Uterus (tissue), 4 donors: ENCODE measurements at regions of chr17 and their contacts with region 1.

Region 1: DNA sequence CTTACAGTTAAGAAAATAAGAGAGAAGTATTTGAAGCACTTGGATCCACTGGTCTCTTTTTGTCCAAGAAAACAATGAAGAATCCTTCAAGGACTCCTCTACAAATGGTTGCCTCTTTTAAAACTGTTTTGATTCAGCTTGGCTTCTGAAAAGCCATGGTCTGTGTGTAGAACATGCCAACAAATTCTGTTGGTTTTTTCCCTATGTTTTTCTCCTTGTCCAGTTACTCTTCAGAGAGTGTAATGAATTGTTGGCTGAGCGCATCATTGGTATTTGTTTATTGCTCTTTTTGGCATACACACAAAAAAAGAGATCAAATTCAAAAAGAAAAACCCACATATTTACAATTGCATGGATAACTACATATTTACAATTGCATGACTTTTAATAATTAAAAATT is at the start of gene ABCA10:
- DNase-seq: no peak
- H3K4me3 ChIP-seq: peak within 1 kb of the TSS in 1 of 2 donors; percentile 28
- H3K27ac ChIP-seq: peak within 1 kb of the TSS; percentile 46 to 69
- H3K4me1 ChIP-seq: no peaks in the 10 kb centered on the region
- H3K27me3 ChIP-seq: no peaks in the 10 kb centered on the region
- CTCF ChIP-seq: no peak
- POLR2A ChIP-seq: no peak
- total RNA-seq, gene ABCA10: 11.1 to 32.8 (median 21.7) TPM

Region 2: DNA sequence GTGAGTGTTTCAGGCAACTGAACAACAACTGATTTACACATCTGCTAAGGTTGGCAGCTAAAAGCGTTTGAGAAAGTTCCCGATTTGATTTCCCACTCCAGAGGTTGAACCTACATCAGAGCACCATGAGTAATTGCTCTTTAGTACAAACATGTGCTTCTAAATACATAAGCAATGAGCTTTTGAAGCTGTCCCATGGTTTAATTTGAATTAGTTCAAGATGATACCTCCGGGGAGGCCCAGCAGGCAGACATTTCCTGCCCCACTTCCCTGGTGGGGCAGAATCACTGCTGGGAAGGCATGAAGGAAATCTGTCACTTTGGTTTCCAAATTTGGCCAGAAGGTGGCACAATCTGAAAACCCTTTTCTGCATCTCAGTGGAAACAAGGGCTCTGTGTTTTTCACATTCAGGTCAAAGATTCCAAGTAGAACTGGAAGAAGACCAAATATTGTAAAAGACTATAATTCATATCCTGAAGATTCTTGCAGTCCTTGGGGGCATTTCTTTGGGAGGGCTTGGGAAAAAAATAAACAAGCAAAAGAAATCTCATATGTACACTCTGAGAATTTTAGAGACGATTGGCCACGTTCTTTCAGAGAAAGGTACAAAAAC is 451.2 kb before region 1 on chr17:
- intact Hi-C with region 1: loop called (anchors 5 kb)
- DNase-seq: peak; percentile 49 to 72
- H3K4me3 ChIP-seq: no peak overlapping the region
- H3K27ac ChIP-seq: peak overlapping the region; percentile 67 to 76
- H3K4me1 ChIP-seq: peaks cover 0 to 5% of the 10 kb centered on the region in 2 donors
- H3K27me3 ChIP-seq: no peaks in the 10 kb centered on the region
- CTCF ChIP-seq: peak; percentile 69 to 84 (median 72)
- POLR2A ChIP-seq: peak in 1 of 2 donors; percentile 8

Region 3: DNA sequence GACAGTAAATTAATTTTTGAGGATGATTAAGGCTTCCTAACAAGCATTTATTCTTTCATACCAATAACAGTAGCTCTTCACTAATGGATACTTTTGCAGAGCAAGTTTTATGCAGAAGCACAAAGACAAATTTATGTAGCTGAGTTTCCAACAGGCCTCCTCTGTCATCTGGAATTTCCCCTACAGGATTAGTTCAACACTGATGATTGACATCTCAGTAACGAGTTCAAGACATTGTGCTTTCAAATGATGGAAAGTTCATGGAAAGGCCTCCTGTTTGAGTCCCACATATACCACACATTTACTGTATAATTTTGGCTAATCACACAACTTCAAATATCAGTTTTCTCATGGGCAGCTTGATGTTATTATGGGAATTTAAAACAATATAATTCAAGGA is 40.5 kb before region 1 on chr17:
- intact Hi-C with region 1: no loop called
- DNase-seq: no peak
- H3K4me3 ChIP-seq: no peak overlapping the region
- H3K27ac ChIP-seq: no peak overlapping the region
- H3K4me1 ChIP-seq: no peaks in the 10 kb centered on the region
- H3K27me3 ChIP-seq: no peaks in the 10 kb centered on the region
- CTCF ChIP-seq: no peak
- POLR2A ChIP-seq: no peak

Region 4: DNA sequence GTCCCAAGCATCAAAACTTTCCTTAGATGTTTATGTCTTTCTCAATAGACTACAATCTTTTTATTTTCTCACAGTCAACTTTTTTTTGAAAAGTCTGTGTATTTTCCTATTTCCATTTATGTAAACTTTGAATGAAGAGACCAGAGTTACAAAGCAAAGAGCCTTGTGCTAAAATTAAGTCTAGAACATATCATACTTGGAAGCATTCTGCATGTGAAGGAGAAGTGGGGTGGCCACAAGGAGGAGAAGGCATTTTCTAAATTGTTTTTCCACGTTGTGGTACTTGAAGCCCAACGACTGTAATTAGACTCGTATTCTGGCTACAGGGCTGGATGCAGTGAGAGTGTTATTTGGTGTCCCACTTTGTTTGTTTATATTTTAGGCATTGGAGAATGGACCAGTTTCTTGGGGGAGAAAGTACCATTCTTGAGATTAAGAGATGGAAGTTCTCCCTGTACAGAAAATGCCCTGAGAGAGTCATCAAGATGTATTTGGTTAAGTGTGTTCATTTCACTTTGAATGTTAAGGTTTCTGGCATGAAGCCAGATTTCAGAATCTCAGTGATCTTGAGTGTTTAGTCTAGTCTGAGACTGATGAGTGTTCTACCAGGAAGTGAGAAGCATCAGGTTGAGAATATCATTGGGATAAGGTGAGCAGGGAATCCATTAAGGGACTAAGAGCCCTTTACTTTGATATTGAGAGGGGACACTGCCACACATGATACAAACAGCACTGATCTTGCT is 257.5 kb after region 1 on chr17:
- intact Hi-C with region 1: no loop called
- DNase-seq: no peak
- H3K4me3 ChIP-seq: no peak overlapping the region
- H3K27ac ChIP-seq: peak overlapping the region in 1 of 2 donors; percentile 46
- H3K4me1 ChIP-seq: no peaks in the 10 kb centered on the region
- H3K27me3 ChIP-seq: no peaks in the 10 kb centered on the region
- CTCF ChIP-seq: no peak
- POLR2A ChIP-seq: no peak